ENCODE measurements at regions of chr1 and their contacts with region 1.

Region 1: DNA sequence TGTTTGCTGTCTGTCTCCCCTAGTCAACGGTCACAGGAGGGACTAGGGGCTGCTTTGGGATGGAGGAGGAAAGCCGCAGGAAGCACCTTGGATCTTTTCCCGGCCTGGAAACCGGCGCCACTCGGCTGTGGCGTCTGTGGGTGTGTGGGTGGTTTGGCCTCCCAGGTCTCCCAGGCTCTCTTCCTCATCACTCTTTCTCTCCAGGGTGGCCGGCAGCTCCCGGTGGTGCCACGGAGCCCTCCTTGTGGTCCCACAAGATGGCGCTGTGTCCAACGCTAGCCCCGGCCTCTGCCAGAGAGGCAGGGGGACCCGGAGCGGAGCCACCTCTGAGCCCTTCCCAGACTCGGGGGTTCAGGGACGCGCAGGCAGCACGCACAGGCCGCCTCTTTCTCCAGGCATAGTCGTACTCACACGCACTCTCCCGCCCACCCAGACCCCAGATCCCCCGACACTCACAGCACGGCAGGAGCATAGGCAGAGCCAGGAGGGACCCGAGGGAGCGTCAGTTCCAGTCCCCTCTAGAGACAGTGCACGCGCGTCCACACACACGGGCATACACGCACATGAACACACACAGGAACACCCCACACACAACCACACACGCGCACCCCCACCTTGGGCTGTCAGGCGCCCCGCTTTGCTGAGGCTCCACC is 31.2 kb downstream of the CDCP2 start:
- DNase-seq: peak; percentile 37
- H3K4me3 ChIP-seq: peak overlapping the region; percentile 34; the same call in 1 of the 2 replicates
- H3K27ac ChIP-seq: no peak overlapping the region
- H3K27me3 ChIP-seq: peaks cover 6% of the 10 kb centered on the region
- CTCF ChIP-seq: peak; percentile 78

Region 2: DNA sequence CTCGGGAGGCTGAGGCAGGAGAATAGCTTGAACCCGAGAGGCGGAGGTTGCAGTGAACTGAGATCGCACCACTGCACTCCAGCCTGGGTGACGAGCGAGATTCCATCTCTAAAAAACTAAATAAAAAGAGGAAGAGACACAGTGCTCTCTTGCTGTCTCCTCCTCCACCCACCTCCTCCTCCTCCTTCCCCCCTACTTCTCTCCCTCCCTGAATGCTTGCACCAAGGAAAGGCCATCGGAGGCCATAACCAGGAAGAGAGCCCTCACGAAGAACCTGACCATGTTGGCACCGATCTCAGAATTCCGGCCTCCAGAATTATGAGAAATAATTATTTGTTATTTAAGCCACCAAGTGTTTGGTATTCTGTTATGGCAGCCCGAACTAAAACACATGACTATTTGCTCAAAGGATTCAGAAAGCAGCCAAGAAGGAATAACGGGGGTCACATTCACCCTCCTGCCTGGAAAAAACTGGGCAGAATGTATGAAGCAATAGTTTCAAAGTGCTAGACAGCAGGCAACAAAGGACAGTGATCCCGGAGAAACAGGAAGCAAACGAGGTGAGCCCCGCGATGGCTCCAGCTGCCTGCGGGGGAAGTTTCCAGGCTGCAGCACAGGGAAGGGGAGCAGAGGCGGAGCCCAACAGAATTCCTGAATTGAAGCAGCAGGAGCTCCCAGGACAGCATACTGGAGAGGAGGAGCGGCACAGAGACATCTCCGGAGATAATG is 139.4 kb before region 1 on chr1:
- CTCF ChIA-PET with region 1: no interaction called
- POLR2A ChIA-PET with region 1: no interaction called
- DNase-seq: peak; percentile 10
- H3K4me3 ChIP-seq: peak overlapping the region; percentile 47
- H3K27ac ChIP-seq: peak overlapping the region; percentile 61
- H3K27me3 ChIP-seq: no peaks in the 10 kb centered on the region
- CTCF ChIP-seq: no peak

Region 3: DNA sequence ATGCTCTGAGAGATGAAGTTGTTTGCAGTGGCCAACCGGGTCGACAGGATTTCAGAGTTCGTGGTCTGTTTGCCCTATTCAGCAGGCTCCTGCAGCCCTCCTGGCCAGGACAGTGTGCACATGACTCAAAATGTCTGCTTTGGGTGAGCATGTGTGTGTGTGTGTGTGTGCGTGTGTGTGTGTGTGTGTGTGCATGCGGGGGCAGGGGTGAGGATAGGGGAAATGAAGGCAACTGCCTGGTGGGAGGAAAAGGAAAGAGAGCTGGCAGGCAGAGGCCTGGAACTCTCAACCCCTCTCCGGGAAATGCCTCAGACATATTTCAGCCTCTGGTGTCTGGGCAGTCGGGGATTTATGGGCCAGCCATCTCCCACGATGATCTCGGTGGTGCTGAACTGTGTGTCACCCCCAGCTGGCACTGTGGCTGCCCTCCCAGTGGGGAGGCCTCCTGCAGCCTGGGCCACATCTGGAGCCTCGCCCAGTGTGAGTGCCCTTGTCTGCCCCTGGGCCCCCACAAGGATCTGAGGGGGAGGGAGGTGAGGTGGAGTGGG is 16.0 kb after region 1 on chr1:
- CTCF ChIA-PET with region 1: interaction called, 19 read pairs
- POLR2A ChIA-PET with region 1: interaction called, 3 read pairs
- DNase-seq: no peak
- H3K4me3 ChIP-seq: no peak overlapping the region
- H3K27ac ChIP-seq: no peak overlapping the region
- H3K27me3 ChIP-seq: peaks cover 4% of the 10 kb centered on the region
- CTCF ChIP-seq: no peak

Region 4: GRCh38 chr1:54421101-54421504 is 299.5 kb after region 1 on chr1:
- CTCF ChIA-PET with region 1: no interaction called
- POLR2A ChIA-PET with region 1: no interaction called
- DNase-seq: no peak
- H3K4me3 ChIP-seq: no peak overlapping the region
- H3K27ac ChIP-seq: no peak overlapping the region
- H3K27me3 ChIP-seq: peaks cover 7% of the 10 kb centered on the region
- CTCF ChIP-seq: no peak